IMR-90 (cell line): ENCODE measurements at regions of chr15 and their contacts with region 1.

Region 1: DNA sequence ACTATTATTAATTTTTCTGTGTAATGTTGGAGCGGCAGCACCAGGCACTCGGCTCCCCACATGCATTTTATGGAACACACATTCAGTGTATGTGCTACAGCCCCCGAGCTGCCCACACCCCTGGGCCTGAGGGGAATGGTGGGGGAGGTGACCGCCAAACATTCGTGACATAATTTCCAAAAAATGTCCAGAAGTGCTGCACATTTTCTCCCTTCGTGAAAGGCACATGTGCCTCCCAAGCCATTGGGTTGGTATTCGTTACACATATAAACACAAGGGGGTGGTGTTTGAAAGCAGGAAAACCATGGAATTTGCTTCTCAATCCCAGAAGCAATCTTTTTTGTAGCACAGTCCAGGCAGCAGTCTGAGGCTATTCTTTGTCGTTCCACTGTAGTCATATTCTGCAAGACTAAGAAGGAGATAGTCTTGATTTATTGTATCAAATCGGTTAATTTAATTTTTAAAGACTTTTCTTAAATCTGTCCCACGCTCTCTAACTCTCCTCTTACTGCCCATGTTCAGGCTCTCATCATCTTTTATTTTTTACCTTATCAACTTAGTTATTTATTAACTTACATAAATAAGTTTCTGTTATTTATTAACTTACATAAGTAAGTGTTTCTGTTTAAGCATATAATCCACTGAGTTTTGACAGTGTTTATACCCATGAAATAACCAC is 39.2 kb upstream of the POLR2M start:
- DNase-seq: peak; percentile 71
- ATAC-seq: peak; percentile 97
- H3K4me3 ChIP-seq: no peak overlapping the region
- H3K27ac ChIP-seq: no peak overlapping the region
- H3K4me1 ChIP-seq: no peaks in the 10 kb centered on the region
- H3K27me3 ChIP-seq: peaks cover 8% of the 10 kb centered on the region
- CTCF ChIP-seq: peak; percentile 57
- POLR2A ChIP-seq: no peak
- RAD21 ChIP-seq: peak; percentile 66

Region 2: GRCh38 chr15:57706405-57707209 is 39.3 kb after region 1 on chr15 and contains the start of gene POLR2M:
- CTCF ChIA-PET with region 1: interaction called, 4 read pairs
- POLR2A ChIA-PET with region 1: no interaction called
- dilution Hi-C with region 1: no loop called
- in situ Hi-C with region 1: no loop called
- intact Hi-C with region 1: loop called (anchors 1 kb)
- DNase-seq: peak; percentile 100
- ATAC-seq: peak; percentile 92
- H3K4me3 ChIP-seq: peak within 1 kb of the TSS; percentile 95
- H3K27ac ChIP-seq: peak within 1 kb of the TSS; percentile 94
- H3K4me1 ChIP-seq: no peaks in the 10 kb centered on the region
- H3K27me3 ChIP-seq: no peaks in the 10 kb centered on the region
- CTCF ChIP-seq: no peak
- POLR2A ChIP-seq: peak; percentile 82
- RAD21 ChIP-seq: no peak
- total RNA-seq, gene POLR2M: 83.0 and 117 TPM in 2 replicates

Region 3: DNA sequence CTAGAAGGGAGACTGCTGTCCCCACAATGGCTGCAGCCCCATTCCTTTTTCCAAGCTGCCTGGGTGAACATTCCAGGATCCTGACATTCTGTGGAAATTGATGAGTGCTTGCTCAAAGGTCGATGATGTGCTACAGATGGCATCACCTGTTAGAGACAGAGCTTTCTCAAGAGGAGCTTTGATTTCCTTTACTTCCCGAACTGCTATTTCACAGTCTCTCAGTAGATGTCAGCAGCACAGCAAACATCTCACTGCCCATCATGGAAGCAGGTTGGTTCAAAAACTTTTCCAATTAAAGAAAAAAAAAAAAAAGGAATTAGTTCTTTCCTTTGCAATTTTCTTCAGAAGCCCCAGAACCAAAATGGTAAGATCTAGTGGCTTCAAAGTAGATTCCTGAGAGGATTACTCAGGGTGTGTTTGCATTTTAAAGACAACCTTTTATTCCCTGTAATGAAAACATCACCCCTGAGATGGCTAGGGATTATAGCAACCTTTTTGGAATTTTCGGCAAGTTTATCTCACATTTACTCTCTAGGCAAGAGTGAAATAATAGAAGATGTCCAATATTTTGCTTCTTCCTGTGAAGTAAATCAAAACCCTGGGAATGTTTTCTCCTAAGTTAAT is 84.0 kb after region 1 on chr15:
- CTCF ChIA-PET with region 1: interaction called, 3 read pairs
- POLR2A ChIA-PET with region 1: no interaction called
- dilution Hi-C with region 1: no loop called
- in situ Hi-C with region 1: no loop called
- intact Hi-C with region 1: loop called (anchors 5 kb)
- DNase-seq: peak; percentile 40
- ATAC-seq: peak; percentile 73
- H3K4me3 ChIP-seq: no peak overlapping the region
- H3K27ac ChIP-seq: no peak overlapping the region
- H3K4me1 ChIP-seq: no peaks in the 10 kb centered on the region
- H3K27me3 ChIP-seq: no peaks in the 10 kb centered on the region; the same call in 1 of the 2 replicates
- CTCF ChIP-seq: peak; percentile 51
- POLR2A ChIP-seq: no peak
- RAD21 ChIP-seq: peak; percentile 55

Region 4: GRCh38 chr15:57866149-57866736 is 198.9 kb after region 1 on chr15:
- CTCF ChIA-PET with region 1: interaction called, 3 read pairs
- POLR2A ChIA-PET with region 1: no interaction called
- dilution Hi-C with region 1: no loop called
- in situ Hi-C with region 1: loop called (anchors 10 kb)
- intact Hi-C with region 1: loop called (anchors 1 kb)
- DNase-seq: peak; percentile 15
- ATAC-seq: peak; percentile 68; the same call in 1 of the 2 replicates
- H3K4me3 ChIP-seq: no peak overlapping the region
- H3K27ac ChIP-seq: no peak overlapping the region
- H3K4me1 ChIP-seq: no peaks in the 10 kb centered on the region
- H3K27me3 ChIP-seq: no peaks in the 10 kb centered on the region
- CTCF ChIP-seq: peak; percentile 63
- POLR2A ChIP-seq: no peak
- RAD21 ChIP-seq: peak; percentile 45

Region 5: DNA sequence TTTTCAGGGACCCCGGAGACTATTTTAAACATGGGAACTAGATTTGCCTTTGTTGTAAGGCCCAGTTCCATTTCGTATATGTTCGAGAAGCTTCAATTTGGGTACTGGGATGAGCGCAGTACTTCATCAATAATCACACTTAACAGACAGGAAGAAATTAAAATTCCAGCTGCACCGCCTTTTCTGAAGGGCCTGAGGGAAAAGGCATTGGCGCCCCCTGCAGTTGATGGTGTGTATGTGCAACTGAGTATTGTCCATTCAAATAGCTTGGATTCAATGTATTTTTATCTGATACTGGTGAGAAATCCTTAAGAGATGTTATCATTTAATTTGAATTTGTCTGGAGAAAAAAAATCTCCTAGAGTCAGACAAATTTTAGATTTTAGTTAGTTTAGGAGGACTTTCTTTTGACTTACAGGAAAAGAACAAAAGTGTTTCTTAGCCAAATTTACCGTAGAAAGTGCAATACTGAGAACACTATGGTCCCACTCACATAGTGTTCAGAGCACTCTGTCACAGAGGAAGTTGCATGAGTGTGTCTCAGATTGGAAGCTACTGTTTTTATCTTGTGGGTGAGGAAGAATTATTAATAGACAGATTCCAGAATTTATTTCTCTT is 403.6 kb after region 1 on chr15:
- CTCF ChIA-PET with region 1: interaction called, 4 read pairs
- POLR2A ChIA-PET with region 1: no interaction called
- dilution Hi-C with region 1: no loop called
- in situ Hi-C with region 1: no loop called
- intact Hi-C with region 1: loop called (anchors 10 kb)
- DNase-seq: peak; percentile 43
- ATAC-seq: peak; percentile 57
- H3K4me3 ChIP-seq: no peak overlapping the region
- H3K27ac ChIP-seq: no peak overlapping the region
- H3K4me1 ChIP-seq: 0 out of 2 replicates have a peak, but pooled peaks cover 1% of the 10 kb centered on the region
- H3K27me3 ChIP-seq: peaks cover 29% of the 10 kb centered on the region
- CTCF ChIP-seq: peak; percentile 77
- POLR2A ChIP-seq: no peak
- RAD21 ChIP-seq: peak; percentile 65